ENCODE measurements at regions of chr7 and their contacts with region 1.

Region 1: DNA sequence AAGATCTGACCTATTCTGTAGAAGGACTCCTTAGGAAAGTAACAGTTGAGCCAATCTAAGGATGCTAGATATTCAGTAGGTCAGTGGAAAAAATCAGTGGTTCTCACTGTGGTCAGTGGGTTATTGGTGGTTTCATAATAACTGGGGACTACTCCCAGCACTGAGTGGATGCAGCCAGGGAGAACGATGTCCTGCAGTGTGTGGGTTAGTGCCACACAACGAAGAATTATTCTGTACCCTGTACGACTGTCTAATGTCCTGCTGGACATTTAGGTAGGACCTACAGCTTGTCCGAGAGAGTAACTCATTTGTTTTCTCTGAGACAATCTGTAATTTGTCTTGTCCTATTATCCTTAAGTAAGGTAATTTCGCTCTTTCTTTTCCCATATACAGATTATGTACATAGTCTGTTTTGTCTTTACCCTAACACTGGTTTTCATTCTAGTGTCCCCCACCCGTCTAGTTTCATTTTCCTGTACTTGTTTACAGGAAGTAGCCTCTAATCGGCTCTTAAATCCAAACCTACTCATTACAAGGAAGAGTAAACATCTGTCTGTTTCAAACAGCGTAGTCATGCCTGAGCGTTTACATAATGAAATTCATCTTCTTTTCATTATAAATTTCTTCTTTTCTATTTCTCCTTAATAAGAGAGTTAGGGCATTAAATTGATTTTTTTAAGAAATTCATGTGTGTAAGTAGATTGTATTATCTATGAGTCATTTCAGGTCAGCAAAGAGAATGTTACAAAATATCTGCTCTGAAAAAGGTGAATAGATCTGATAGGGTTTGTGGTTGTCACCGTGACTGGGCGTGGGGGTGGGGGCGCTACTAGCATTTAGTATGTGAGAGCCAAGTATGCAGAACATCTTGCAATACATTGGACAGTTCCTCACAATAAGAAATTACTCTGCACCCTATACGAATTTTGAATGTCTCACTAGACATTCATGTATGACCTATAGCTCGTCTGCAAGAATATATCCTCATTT is 8.3 kb upstream of the ZC3HAV1L start:
- DNase-seq: peak; percentile 74
- H3K4me3 Mint-ChIP-seq: peak overlapping the region; percentile 62
- H3K27ac Mint-ChIP-seq: peak overlapping the region; percentile 78
- H3K4me1 Mint-ChIP-seq: peaks cover 60% of the 10 kb centered on the region
- H3K27me3 Mint-ChIP-seq: no peaks in the 10 kb centered on the region

Region 2: GRCh38 chr7:138900035-138900828 is 143.9 kb before region 1 on chr7:
- intact Hi-C with region 1: loop called (anchors 2 kb)
- DNase-seq: no peak
- H3K4me3 Mint-ChIP-seq: no peak overlapping the region
- H3K27ac Mint-ChIP-seq: no peak overlapping the region
- H3K4me1 Mint-ChIP-seq: peaks cover 53% of the 10 kb centered on the region
- H3K27me3 Mint-ChIP-seq: peaks cover 16% of the 10 kb centered on the region

Region 3: DNA sequence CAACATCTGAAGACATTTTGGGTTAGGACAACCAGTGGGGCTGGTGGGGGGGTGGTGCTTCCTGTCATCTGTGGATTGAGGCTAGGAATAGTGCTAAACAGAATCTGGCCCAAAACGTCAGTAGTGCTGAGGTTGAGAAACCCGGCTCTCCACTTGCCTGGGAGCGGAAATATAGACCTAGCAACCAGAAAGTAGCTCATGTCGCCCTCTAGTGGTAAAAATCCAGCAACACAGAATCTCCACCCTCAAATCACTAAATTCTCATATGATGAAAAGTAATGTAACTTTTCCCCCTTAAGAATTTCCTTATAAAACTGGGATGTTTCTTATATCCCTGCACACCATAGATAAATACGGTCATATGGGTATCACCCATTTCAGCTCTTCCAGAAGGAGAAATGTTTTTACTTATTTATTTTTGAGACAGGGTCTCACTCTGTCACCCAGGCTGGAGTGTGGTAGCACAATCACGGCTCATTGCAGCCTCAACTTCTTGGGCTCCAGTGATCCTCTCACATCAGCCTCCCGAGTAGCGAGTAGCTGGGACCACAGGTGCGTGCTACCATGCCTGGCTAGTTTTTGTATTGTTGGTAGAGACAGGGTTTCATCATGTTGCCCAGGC is 31.0 kb after region 1 on chr7:
- intact Hi-C with region 1: loop called (anchors 1 kb)
- DNase-seq: peak; percentile 57
- H3K4me3 Mint-ChIP-seq: peak overlapping the region; percentile 13
- H3K27ac Mint-ChIP-seq: peak overlapping the region; percentile 78
- H3K4me1 Mint-ChIP-seq: peaks cover 52% of the 10 kb centered on the region
- H3K27me3 Mint-ChIP-seq: no peaks in the 10 kb centered on the region

Region 4: DNA sequence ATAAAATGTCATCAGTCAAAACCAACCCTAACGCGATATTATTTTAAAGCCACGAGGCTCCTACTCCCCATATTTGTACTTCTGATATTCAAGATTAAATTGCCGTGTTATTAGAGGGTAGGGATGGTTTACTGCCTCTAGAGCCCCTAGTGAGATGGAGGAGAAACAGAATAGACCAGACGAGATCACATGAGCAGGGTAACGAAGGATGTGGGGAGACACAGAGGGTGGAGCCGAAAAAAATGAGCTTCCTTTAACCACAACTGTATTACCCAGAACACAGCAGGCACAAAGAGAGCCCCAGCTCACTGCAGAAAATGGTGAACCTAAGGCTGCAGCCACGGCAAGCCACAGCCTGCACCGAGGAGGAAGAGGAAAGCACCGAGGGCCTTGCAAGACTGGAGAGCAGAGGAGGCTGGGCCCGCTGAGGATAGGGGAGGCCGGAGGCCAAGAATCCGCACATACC is 51.1 kb after region 1 on chr7:
- intact Hi-C with region 1: loop called (anchors 2 kb)
- DNase-seq: peak; percentile 87
- H3K4me3 Mint-ChIP-seq: peak overlapping the region; percentile 83
- H3K27ac Mint-ChIP-seq: peak overlapping the region; percentile 88
- H3K4me1 Mint-ChIP-seq: peaks cover 76% of the 10 kb centered on the region
- H3K27me3 Mint-ChIP-seq: no peaks in the 10 kb centered on the region

Region 5: DNA sequence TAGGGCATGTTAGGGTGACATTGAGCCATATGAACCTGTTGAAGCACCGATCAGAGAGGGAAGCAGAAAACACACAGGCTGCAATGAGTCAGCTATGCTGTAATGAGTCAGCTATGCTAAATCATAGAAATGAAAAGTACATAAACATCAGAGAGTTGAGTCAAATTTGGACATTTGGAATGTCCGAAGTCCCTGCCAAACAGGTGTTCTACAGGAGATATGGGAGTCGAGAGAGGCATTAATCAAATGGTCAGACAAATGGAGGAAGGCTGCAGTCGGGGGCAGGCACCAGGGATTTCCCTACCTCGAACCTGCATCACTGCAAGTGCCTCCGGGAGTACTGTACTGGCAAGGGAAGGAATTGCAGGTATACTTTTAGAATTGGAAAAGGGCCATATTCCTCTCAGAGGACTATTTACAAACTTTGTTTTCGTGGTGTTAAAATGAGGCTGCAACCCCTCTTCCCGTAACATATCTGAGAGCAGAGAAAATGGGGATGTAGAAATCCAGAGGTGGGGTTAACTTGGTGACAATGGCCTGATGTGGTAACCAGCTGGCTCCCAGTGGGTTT is 74.2 kb after region 1 on chr7:
- intact Hi-C with region 1: loop called (anchors 2 kb)
- DNase-seq: no peak
- H3K4me3 Mint-ChIP-seq: peak overlapping the region; percentile 44
- H3K27ac Mint-ChIP-seq: peak overlapping the region; percentile 74
- H3K4me1 Mint-ChIP-seq: peaks cover 26% of the 10 kb centered on the region
- H3K27me3 Mint-ChIP-seq: no peaks in the 10 kb centered on the region

Region 6: GRCh38 chr7:139340037-139340807 is 296.1 kb after region 1 on chr7:
- intact Hi-C with region 1: loop called (anchors 5 kb)
- DNase-seq: peak; percentile 97
- H3K4me3 Mint-ChIP-seq: peak overlapping the region; percentile 97
- H3K27ac Mint-ChIP-seq: peak overlapping the region; percentile 100
- H3K4me1 Mint-ChIP-seq: peaks cover 21% of the 10 kb centered on the region
- H3K27me3 Mint-ChIP-seq: peaks cover 3% of the 10 kb centered on the region

Region 7: DNA sequence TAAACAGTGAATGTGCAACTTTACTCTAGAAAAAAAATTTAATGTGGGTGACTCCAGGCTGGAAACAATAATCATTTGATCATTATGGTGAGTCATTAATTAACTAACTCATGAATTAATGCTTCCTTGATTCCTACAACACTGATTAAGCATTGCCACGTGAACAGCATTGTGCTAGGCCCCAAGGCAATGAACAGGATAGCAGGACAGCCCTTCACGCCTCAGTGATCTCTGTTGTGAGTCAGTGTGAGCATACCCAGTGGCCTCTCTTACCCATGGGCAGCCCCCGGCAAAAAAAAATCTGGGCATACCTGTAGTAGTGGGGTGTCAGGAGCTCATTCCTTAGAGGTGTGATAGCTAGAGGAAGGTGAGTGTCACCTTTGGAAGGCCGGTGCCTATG is 1520.5 kb after region 1 on chr7:
- intact Hi-C with region 1: no loop called
- DNase-seq: no peak
- H3K4me3 Mint-ChIP-seq: no peak overlapping the region
- H3K27ac Mint-ChIP-seq: no peak overlapping the region
- H3K4me1 Mint-ChIP-seq: no peaks in the 10 kb centered on the region
- H3K27me3 Mint-ChIP-seq: peaks cover 2% of the 10 kb centered on the region

Measured in activated T-helper 2 cell treated with anti-CD3 and anti-CD28 coated beads, Interferon-gamma antibody, Interleukin-2, Interleukin-4, amounts not matched to agents 10 μg/mL and 5 μg/mL and 100 μg/mL, durations not matched to agents 14 hours and 24 hours and 36 hours (primary cell).